ENCODE measurements at regions of chr19 and their contacts with region 1.

Region 1: DNA sequence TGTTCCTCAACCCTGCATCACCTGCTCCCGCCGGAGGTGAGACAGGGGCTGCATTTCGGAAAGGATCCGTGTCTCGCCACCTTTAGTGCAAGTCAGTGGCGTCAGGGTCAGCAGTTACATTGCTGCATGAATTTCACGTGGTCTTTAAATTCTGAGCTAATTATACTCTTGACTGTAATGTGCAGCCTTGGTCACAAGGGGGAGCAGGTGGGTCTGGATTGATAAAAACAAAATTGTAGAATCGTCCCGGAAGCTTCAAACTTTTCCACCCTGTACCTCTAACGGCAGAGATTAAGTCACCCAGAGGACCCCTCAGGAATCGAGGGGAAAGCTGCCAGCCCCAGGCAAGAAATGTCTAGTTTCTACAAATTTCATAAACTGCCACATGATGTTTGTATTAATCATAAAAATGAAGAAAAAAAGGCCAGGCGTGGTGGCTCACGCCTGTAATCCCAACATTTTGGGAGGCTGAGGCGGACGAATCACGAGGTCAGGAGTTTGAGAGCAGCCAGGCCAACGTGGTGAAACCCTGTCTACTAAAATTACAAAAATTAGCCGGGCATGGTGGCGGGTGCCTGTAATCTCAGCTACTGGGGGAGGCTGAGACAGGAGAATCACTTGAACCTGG is 20.2 kb downstream of the BBC3 start:
- DNase-seq: peak; percentile 84
- H3K4me3 Mint-ChIP-seq: no peak overlapping the region
- H3K27ac Mint-ChIP-seq: peak overlapping the region; percentile 72
- H3K4me1 Mint-ChIP-seq: peaks cover 16% of the 10 kb centered on the region
- H3K27me3 Mint-ChIP-seq: no peaks in the 10 kb centered on the region

Region 2: DNA sequence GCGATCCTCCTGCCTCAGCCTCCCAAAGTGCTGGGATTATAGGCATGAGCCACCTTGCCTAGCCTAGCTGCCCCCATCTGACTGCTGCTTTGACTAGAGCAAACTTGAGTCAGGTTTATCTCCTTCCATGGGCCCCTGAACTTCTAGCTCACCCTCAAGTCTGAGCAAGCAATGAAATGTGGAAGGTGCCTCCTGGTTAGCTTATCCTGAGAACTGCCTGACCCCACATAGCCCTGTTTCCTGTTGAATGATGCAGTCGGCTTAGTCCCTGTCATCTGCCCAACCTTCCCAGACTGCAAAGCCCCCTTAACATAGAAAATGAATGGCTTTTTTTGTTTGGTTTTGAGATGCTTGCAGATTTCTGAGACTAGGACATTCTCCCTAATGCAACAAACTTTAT is 153.5 kb before region 1 on chr19:
- CTCF ChIA-PET with region 1: no interaction called
- POLR2A ChIA-PET with region 1: no interaction called
- DNase-seq: no peak
- H3K4me3 Mint-ChIP-seq: no peak overlapping the region
- H3K27ac Mint-ChIP-seq: no peak overlapping the region
- H3K4me1 Mint-ChIP-seq: no peaks in the 10 kb centered on the region
- H3K27me3 Mint-ChIP-seq: peaks cover 12% of the 10 kb centered on the region

Region 3: GRCh38 chr19:47186446-47187334 is 24.1 kb before region 1 on chr19:
- CTCF ChIA-PET with region 1: interaction called, 28 read pairs
- POLR2A ChIA-PET with region 1: interaction called, 7 read pairs
- DNase-seq: peak; percentile 77
- H3K4me3 Mint-ChIP-seq: peak overlapping the region; percentile 28
- H3K27ac Mint-ChIP-seq: peak overlapping the region; percentile 90
- H3K4me1 Mint-ChIP-seq: peaks cover 79% of the 10 kb centered on the region
- H3K27me3 Mint-ChIP-seq: no peaks in the 10 kb centered on the region

Region 4: GRCh38 chr19:47225746-47226425 is 15.1 kb after region 1 on chr19:
- CTCF ChIA-PET with region 1: interaction called, 54 read pairs
- POLR2A ChIA-PET with region 1: interaction called, 84 read pairs
- DNase-seq: peak; percentile 88
- H3K4me3 Mint-ChIP-seq: peak overlapping the region; percentile 79
- H3K27ac Mint-ChIP-seq: peak overlapping the region; percentile 89
- H3K4me1 Mint-ChIP-seq: peaks cover 18% of the 10 kb centered on the region
- H3K27me3 Mint-ChIP-seq: no peaks in the 10 kb centered on the region

Region 5: GRCh38 chr19:47256688-47257443 is 46.1 kb after region 1 on chr19:
- CTCF ChIA-PET with region 1: interaction called, 5 read pairs
- POLR2A ChIA-PET with region 1: interaction called, 17 read pairs
- DNase-seq: peak; percentile 100
- H3K4me3 Mint-ChIP-seq: peak overlapping the region; percentile 85
- H3K27ac Mint-ChIP-seq: peak overlapping the region; percentile 85
- H3K4me1 Mint-ChIP-seq: peaks cover 40% of the 10 kb centered on the region
- H3K27me3 Mint-ChIP-seq: no peaks in the 10 kb centered on the region

Region 6: GRCh38 chr19:47268028-47268427 is 57.2 kb after region 1 on chr19:
- CTCF ChIA-PET with region 1: no interaction called
- POLR2A ChIA-PET with region 1: no interaction called
- DNase-seq: no peak
- H3K4me3 Mint-ChIP-seq: no peak overlapping the region
- H3K27ac Mint-ChIP-seq: no peak overlapping the region
- H3K4me1 Mint-ChIP-seq: peaks cover 9% of the 10 kb centered on the region
- H3K27me3 Mint-ChIP-seq: no peaks in the 10 kb centered on the region

Measured in activated CD4-positive, alpha-beta memory T cell treated with anti-CD3 and anti-CD28 coated beads, Interleukin-2, amount 10 ng/mL, durations not matched to agents 7 days and 5 days (primary cell).